ENCODE measurements at regions of chr6 and their contacts with region 1.

Region 1: DNA sequence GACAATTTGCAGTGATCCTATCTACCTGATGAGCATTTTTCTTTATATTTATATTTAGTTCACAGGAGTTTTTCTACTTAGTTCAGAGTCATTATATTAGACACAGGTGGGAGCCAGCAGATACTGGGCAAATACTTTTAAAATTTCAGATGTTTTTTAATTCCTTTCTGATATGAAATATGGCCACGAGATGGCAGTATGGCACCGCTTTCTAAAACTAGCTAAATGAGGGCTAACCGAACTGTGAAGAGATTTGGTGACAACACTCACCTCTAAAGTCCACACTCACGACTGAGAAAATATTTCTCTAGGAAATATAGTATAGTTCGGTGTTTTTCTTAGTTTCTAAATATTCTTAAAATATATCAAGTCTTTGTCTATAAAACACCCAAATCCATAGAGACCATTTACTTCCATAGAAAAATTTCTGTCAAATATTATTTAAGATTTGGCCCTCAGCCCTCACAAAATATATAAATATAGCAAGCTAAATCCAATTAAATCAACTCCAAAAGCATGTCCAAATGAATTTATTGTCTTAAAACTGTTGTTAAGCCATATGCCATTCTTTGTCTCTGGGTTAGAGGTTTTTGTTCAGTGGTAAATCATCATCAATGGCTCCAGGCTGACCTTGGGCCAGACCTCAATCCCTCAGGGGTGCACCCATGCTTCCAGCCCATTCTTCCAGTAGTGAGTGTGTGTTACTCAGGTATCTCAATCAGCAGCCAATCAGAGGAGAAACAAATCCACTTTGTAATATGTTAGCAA is 63.6 kb downstream of the HUS1B start:
- DNase-seq: peak; percentile 74
- ATAC-seq: peak; percentile 33
- H3K4me3 ChIP-seq: no peak overlapping the region
- H3K4me3 Mint-ChIP-seq: no peak overlapping the region
- H3K27ac ChIP-seq: no peak overlapping the region
- H3K27ac Mint-ChIP-seq: no peak overlapping the region
- H3K4me1 ChIP-seq: no peaks in the 10 kb centered on the region
- H3K4me1 Mint-ChIP-seq: no peaks in the 10 kb centered on the region
- H3K27me3 ChIP-seq: no peaks in the 10 kb centered on the region
- H3K27me3 Mint-ChIP-seq: no peaks in the 10 kb centered on the region
- CTCF ChIP-seq: peak; percentile 90

Region 2: DNA sequence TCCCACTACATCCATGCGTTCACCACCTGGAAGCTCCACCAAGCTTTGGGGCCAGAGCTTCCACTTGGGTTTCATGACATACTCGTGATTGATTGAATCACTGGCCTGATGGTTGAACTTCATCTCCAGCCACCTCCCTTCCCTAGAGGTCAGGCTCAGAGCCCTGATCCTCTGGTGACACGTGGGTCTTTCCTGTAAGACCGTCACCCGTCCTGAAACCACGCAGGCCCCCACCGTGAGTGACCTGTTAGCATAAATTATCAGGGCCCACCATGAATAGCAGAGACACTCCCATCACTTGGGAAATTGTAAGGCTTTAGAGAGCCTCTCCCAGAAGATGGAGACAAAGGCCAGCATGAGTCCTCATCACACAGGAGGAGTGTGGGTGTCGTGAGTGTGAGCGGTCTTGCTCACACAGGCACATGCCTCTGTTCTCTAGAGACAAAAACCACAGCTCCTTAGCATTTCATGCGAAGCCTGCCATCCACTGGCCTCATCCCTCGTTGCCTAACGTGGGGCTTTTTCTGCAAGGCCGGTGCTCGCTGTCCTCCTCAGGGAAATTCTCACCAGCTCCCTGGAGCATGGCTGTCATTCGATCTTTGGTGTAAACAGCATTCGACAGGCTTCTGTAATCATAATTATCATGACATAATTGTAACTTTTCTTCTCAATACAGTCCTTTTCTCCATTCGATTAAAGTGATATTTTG is 366.1 kb before region 1 on chr6:
- CTCF ChIA-PET with region 1: interaction called, 8 read pairs
- POLR2A ChIA-PET with region 1: no interaction called
- intact Hi-C with region 1: loop called (anchors 1 kb)
- DNase-seq: peak; percentile 78
- ATAC-seq: peak; percentile 92
- H3K4me3 ChIP-seq: no peak overlapping the region
- H3K4me3 Mint-ChIP-seq: peak overlapping the region; percentile 42
- H3K27ac ChIP-seq: no peak overlapping the region
- H3K27ac Mint-ChIP-seq: peak overlapping the region; percentile 20
- H3K4me1 ChIP-seq: peaks cover 28 to 34% of the 10 kb centered on the region in 2 donors
- H3K4me1 Mint-ChIP-seq: peaks cover 43% of the 10 kb centered on the region
- H3K27me3 ChIP-seq: no peaks in the 10 kb centered on the region
- H3K27me3 Mint-ChIP-seq: no peaks in the 10 kb centered on the region
- CTCF ChIP-seq: peak; percentile 45

Region 3: GRCh38 chr6:701700-702479 is 108.6 kb after region 1 on chr6:
- CTCF ChIA-PET with region 1: interaction called, 10 read pairs
- POLR2A ChIA-PET with region 1: no interaction called
- intact Hi-C with region 1: no loop called
- DNase-seq: no peak
- ATAC-seq: no peak
- H3K4me3 ChIP-seq: no peak overlapping the region
- H3K4me3 Mint-ChIP-seq: no peak overlapping the region
- H3K27ac ChIP-seq: no peak overlapping the region
- H3K27ac Mint-ChIP-seq: no peak overlapping the region
- H3K4me1 ChIP-seq: no peaks in the 10 kb centered on the region
- H3K4me1 Mint-ChIP-seq: no peaks in the 10 kb centered on the region
- H3K27me3 ChIP-seq: no peaks in the 10 kb centered on the region
- H3K27me3 Mint-ChIP-seq: peaks cover 8% of the 10 kb centered on the region
- CTCF ChIP-seq: no peak

Region 4: GRCh38 chr6:786946-787763 is 193.8 kb after region 1 on chr6:
- CTCF ChIA-PET with region 1: interaction called, 13 read pairs
- POLR2A ChIA-PET with region 1: no interaction called
- intact Hi-C with region 1: loop called (anchors 1 kb)
- DNase-seq: peak; percentile 23
- ATAC-seq: no peak
- H3K4me3 ChIP-seq: no peak overlapping the region
- H3K4me3 Mint-ChIP-seq: no peak overlapping the region
- H3K27ac ChIP-seq: no peak overlapping the region
- H3K27ac Mint-ChIP-seq: no peak overlapping the region
- H3K4me1 ChIP-seq: peaks cover 0 to 4% of the 10 kb centered on the region in 2 donors
- H3K4me1 Mint-ChIP-seq: peaks cover 6% of the 10 kb centered on the region
- H3K27me3 ChIP-seq: peaks cover 0 to 10% (median 0%) of the 10 kb centered on the region in 4 experiments
- H3K27me3 Mint-ChIP-seq: peaks cover 16% of the 10 kb centered on the region
- CTCF ChIP-seq: peak; percentile 75

Region 5: GRCh38 chr6:1381481-1382330 is 788.4 kb after region 1 on chr6:
- CTCF ChIA-PET with region 1: interaction called, 5 read pairs
- POLR2A ChIA-PET with region 1: no interaction called
- intact Hi-C with region 1: loop called (anchors 1 kb)
- DNase-seq: peak; percentile 65
- ATAC-seq: peak; percentile 58
- H3K4me3 ChIP-seq: peak overlapping the region in 2 of 5 experiments; percentile 11 to 19
- H3K4me3 Mint-ChIP-seq: peak overlapping the region; percentile 46
- H3K27ac ChIP-seq: no peak overlapping the region
- H3K27ac Mint-ChIP-seq: no peak overlapping the region
- H3K4me1 ChIP-seq: peaks cover 56 to 83% of the 10 kb centered on the region in 2 donors
- H3K4me1 Mint-ChIP-seq: peaks cover 40% of the 10 kb centered on the region
- H3K27me3 ChIP-seq: peaks cover 2 to 95% (median 70%) of the 10 kb centered on the region in 4 experiments
- H3K27me3 Mint-ChIP-seq: peaks cover 62% of the 10 kb centered on the region
- CTCF ChIP-seq: peak; percentile 79

Region 6: DNA sequence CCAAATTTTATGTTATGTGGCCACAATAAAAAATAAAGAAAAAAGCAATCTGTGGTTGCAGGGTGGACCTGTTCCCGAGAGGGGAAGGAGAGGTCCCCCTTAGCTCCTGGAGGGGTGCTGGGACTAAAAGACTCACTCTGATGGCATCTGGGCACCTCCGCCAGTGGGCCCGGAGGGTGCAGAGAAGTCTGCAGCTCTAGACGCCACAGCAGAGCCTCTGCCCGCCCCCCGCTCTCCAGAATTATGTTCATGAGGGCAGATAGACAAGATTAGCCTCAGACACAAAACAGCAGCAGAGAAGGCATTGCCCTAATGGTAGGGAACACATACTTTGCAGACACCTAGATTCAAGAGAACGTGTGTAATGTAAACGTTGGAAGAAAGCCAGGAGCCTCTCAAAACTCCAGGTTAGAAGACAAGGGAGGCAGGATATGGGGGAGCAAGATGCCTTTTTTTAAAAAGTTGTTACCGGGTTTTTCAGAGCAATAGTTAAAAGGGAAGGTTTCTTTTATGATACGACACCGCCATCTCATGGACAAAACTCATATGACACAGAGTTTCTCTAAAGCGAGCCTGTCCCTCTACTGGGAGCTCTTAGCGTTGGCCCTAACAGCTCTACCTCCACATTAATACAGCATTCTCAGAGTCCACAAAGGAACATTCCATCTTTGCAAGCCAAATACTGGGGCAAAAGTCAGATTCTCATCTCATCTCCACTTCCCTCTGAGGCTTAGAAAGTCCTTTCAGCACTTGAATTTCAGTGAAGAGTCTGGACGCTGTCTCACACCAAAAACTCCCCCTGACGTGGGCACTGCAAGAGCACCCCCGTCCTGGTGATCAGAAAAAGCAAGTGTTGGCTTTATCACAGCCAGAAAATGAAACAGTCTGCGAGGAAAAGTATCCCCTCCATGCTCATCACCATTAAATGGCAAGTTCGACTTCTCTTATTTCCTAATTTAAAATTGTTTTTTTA is 843.3 kb after region 1 on chr6:
- CTCF ChIA-PET with region 1: interaction called, 17 read pairs
- POLR2A ChIA-PET with region 1: no interaction called
- intact Hi-C with region 1: loop called (anchors 1 kb)
- DNase-seq: peak; percentile 70
- ATAC-seq: no peak
- H3K4me3 ChIP-seq: no peak overlapping the region
- H3K4me3 Mint-ChIP-seq: no peak overlapping the region
- H3K27ac ChIP-seq: no peak overlapping the region
- H3K27ac Mint-ChIP-seq: no peak overlapping the region
- H3K4me1 ChIP-seq: no peaks in the 10 kb centered on the region
- H3K4me1 Mint-ChIP-seq: no peaks in the 10 kb centered on the region
- H3K27me3 ChIP-seq: peaks cover 0 to 20% (median 10%) of the 10 kb centered on the region in 4 experiments
- H3K27me3 Mint-ChIP-seq: peaks cover 43% of the 10 kb centered on the region
- CTCF ChIP-seq: peak; percentile 78